GM10248 (cell line): ENCODE measurements at regions of chr15 and their contacts with region 1.

Region 1: GRCh38 chr15:65049418-65049840 is 4.2 kb downstream of the SLC51B start:
- DNase-seq: peak; percentile 98
- CTCF ChIP-seq: no peak

Region 2: GRCh38 chr15:65032801-65033537 is 16.5 kb before region 1 on chr15:
- CTCF ChIA-PET with region 1: interaction called, 22 read pairs
- POLR2A ChIA-PET with region 1: no interaction called
- DNase-seq: no peak
- CTCF ChIP-seq: peak; percentile 50

Region 3: DNA sequence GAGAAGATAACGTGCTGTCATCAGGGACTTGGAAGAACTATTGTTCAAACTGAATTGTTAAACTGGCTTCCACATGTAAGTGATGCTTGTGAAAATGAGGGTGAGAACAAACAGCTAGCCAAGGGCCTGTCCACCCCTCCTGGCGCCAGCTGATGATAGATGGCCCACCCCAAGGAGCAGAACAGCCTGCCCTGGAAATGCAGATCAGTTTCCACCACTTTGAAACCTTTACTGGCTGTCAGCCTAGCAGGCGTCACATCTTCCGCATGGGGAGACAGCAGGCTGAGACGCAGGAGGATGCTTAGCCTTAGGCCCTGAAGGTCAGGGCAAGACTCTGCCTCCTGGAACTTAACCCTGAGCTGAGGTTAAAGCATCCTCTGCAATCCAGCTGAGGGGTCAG is 10.6 kb before region 1 on chr15:
- CTCF ChIA-PET with region 1: interaction called, 23 read pairs
- POLR2A ChIA-PET with region 1: no interaction called
- DNase-seq: no peak
- CTCF ChIP-seq: no peak

Region 4: DNA sequence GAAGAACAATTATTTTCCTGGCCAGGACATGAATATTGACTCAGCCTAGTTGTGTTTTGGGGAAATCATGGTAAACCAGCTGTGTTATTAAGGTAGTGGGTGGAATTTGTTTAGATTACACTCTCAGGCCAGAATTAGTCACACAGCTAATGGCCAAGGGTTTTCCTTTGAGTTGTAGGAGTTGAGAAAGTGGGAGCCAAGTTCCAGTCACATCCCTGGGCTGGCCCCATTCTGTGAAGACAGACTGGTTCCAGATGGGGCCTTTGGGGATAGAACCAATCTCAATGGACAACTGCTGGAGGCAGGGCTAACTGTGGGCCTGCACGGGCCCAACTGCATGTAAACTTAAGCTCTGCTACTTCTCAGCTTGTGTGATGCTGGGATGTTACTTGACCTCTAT is 19.8 kb after region 1 on chr15:
- CTCF ChIA-PET with region 1: interaction called, 72 read pairs
- POLR2A ChIA-PET with region 1: no interaction called
- DNase-seq: no peak
- CTCF ChIP-seq: no peak